ENCODE measurements at regions of chr11 and their contacts with region 1.

Region 1: GRCh38 chr11:86904001-86904400 is 51.2 kb downstream of the FZD4 start:
- DNase-seq: no peak
- H3K4me3 ChIP-seq: no peak overlapping the region
- H3K27ac ChIP-seq: no peak overlapping the region
- H3K4me1 ChIP-seq: no peaks in the 10 kb centered on the region
- H3K27me3 ChIP-seq: no peaks in the 10 kb centered on the region
- CTCF ChIP-seq: no peak
- EP300 ChIP-seq: no peak
- POLR2A ChIP-seq: no peak

Region 2: GRCh38 chr11:86440305-86440716 is 463.7 kb before region 1 on chr11:
- intact Hi-C with region 1: loop called in 1 of 4 experiments (anchors 10 kb)
- DNase-seq: peak in 1 of 5 donors; percentile 33
- H3K4me3 ChIP-seq: no peak overlapping the region
- H3K27ac ChIP-seq: no peak overlapping the region
- H3K4me1 ChIP-seq: no peaks in the 10 kb centered on the region
- H3K27me3 ChIP-seq: no peaks in the 10 kb centered on the region
- CTCF ChIP-seq: no peak
- EP300 ChIP-seq: no peak
- POLR2A ChIP-seq: no peak

Region 3: DNA sequence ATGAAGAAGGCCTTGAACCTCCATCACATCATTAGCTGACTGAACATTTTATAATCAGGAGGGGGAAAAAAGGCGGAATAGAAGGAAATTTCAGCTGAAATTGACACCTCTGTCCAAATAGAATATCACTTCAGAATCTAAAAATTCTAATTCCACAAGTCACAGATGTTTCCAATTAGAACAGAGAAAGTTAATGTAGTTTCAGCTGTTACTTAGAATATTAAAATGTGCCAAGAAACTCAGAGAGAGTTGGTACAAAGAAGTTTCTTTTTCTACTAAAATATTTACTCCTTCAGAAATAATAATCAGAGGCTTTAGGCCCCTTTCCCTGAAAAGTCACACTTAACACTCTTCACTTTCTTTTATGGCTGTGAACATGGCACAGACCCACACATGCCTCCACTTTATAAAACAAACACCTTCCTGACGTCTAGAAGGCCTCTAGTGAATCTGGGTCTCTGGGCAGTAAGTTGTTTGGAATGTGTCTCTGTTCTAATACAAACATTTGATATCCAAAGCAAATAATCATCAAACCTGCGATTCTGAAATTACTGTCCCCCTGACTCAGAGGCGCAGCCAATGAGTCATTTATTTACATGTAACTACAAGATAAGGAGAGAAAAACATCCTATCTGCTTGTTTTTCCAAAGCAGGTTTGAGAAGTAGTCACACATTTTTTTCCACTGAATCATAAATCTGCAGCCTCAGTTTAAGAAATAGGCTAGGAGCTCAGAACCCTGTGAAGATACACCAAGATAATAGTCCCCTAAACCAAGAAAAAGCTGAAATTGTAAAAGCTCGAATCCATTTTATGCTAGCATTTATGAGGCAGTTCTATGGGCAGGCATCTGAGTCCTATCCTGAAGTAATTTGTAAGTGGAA is 380.0 kb before region 1 on chr11:
- intact Hi-C with region 1: no loop called
- DNase-seq: peak in 2 of 5 donors; percentile 18 to 40
- H3K4me3 ChIP-seq: no peak overlapping the region
- H3K27ac ChIP-seq: peak overlapping the region in 1 of 2 donors; percentile 56
- H3K4me1 ChIP-seq: peaks cover 17% of the 10 kb centered on the region
- H3K27me3 ChIP-seq: no peaks in the 10 kb centered on the region
- CTCF ChIP-seq: no peak
- EP300 ChIP-seq: no peak
- POLR2A ChIP-seq: no peak

Region 4: DNA sequence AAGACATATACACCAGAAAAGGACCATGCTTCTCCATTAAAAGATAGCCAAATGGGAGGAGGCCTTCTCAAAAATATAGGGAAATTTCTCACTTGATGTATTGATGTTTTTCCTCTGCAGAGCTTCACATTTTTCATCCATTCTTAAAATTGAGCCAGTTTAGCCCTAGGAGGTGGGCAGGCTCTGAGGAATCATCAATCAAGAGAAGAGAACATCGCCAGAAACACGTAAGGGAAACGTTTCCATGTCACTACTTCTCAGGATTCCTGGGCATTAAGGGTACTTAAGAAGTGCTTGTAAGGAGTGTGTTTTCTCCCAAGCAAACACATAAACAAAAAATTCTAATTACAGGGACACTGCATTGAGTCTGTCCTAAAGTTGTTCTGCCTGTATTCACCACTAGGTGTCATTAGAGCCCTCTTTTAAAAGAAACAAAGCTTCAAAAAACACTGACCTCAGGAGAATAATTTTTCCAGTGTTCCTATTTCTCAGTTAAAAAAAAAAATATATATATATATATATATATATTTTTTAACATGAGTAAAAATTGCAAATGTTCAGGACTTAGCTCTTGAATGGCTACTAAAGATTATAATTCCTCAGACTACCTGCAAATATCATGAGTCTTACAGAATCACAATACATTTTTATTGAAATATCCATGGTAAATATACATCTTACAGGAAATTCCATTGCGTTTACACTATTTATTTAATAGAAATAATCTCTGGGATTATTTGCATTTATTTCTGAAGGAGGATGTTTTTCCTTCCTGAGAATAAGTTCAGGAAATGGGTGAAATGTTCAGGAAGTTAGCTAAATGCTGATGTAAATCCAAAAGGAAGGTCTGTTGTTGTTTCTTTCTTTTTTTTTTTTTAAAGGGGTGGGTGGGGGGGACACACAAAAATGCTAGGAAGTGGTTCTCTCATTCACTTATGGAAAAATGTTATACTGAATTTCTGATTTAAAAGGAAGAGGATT is 35.2 kb after region 1 on chr11:
- intact Hi-C with region 1: no loop called
- DNase-seq: no peak
- H3K4me3 ChIP-seq: no peak overlapping the region
- H3K27ac ChIP-seq: peak overlapping the region; percentile 17 to 68
- H3K4me1 ChIP-seq: peaks cover 29% of the 10 kb centered on the region
- H3K27me3 ChIP-seq: no peaks in the 10 kb centered on the region
- CTCF ChIP-seq: peak in 2 of 3 donors; percentile 66 to 78
- EP300 ChIP-seq: no peak
- POLR2A ChIP-seq: no peak

Measured in ovary (tissue), 10 donors.